ENCODE measurements at regions of chr7 and their contacts with region 1.

Region 1: GRCh38 chr7:25851332-25852210 is 300.4 kb upstream of the NFE2L3 start:
- DNase-seq: no peak
- ATAC-seq: peak; percentile 87
- H3K4me3 ChIP-seq: no peak overlapping the region
- H3K27ac ChIP-seq: no peak overlapping the region
- H3K4me1 ChIP-seq: peaks cover 4% of the 10 kb centered on the region; the same call in 1 of the 2 replicates
- H3K27me3 ChIP-seq: peaks cover 8 to 22% of the 10 kb centered on the region in 2 experiments
- CTCF ChIP-seq: peak; percentile 82 to 87 (median 85)
- EP300 ChIP-seq: no peak
- POLR2A ChIP-seq: no peak
- RAD21 ChIP-seq: peak; percentile 82

Region 2: GRCh38 chr7:25389489-25390106 is 462.0 kb before region 1 on chr7:
- CTCF ChIA-PET with region 1: interaction called, 16 read pairs
- POLR2A ChIA-PET with region 1: no interaction called
- RAD21 ChIA-PET with region 1: interaction called, 5 read pairs
- SMC1A ChIA-PET with region 1: no interaction called
- in situ Hi-C with region 1: no loop called
- intact Hi-C with region 1: loop called (anchors 5 kb)
- DNase-seq: peak; percentile 2
- ATAC-seq: 0 out of 3 replicates have a peak, but pooled peaks have one; percentile 23
- H3K4me3 ChIP-seq: no peak overlapping the region
- H3K27ac ChIP-seq: no peak overlapping the region
- H3K4me1 ChIP-seq: no peaks in the 10 kb centered on the region
- H3K27me3 ChIP-seq: peaks cover 0 to 3% of the 10 kb centered on the region in 2 experiments; a peak in 2 of 4 replicates
- CTCF ChIP-seq: peak; percentile 14 to 47 (median 35); a peak in 4 of 6 replicates
- EP300 ChIP-seq: no peak
- POLR2A ChIP-seq: no peak
- RAD21 ChIP-seq: peak; percentile 55

Region 3: GRCh38 chr7:25720427-25720826 is 131.1 kb before region 1 on chr7:
- CTCF ChIA-PET with region 1: interaction called, 6 read pairs
- POLR2A ChIA-PET with region 1: no interaction called
- RAD21 ChIA-PET with region 1: no interaction called
- SMC1A ChIA-PET with region 1: interaction called, 4 read pairs
- in situ Hi-C with region 1: no loop called
- intact Hi-C with region 1: loop called (anchors 5 kb)
- DNase-seq: no peak
- ATAC-seq: peak; percentile 57
- H3K4me3 ChIP-seq: no peak overlapping the region
- H3K27ac ChIP-seq: no peak overlapping the region
- H3K4me1 ChIP-seq: no peaks in the 10 kb centered on the region
- H3K27me3 ChIP-seq: no peaks in the 10 kb centered on the region
- CTCF ChIP-seq: peak; percentile 34 to 43 (median 34); a peak in 3 of 6 replicates
- EP300 ChIP-seq: no peak
- POLR2A ChIP-seq: no peak
- RAD21 ChIP-seq: 0 out of 2 replicates have a peak, but pooled peaks have one; percentile 22

Measured in GM12878 (cell line).